Activated CD8-positive, alpha-beta T cell treated with anti-CD3 and anti-CD28 coated beads for 36 hours (primary cell): ENCODE measurements at regions of chr19 and their contacts with region 1.

Region 1: GRCh38 chr19:1837625-1838105 is 10.6 kb downstream of the REXO1 start:
- DNase-seq: peak; percentile 71
- ATAC-seq: peak; percentile 95
- H3K4me3 Mint-ChIP-seq: no peak overlapping the region
- H3K27ac Mint-ChIP-seq: no peak overlapping the region
- H3K4me1 Mint-ChIP-seq: peaks cover 26% of the 10 kb centered on the region
- H3K27me3 Mint-ChIP-seq: no peaks in the 10 kb centered on the region
- CTCF ChIP-seq: peak; percentile 94

Region 2: GRCh38 chr19:1847684-1848398 is 10.2 kb after region 1 on chr19:
- CTCF ChIA-PET with region 1: interaction called, 24 read pairs
- POLR2A ChIA-PET with region 1: interaction called, 16 read pairs
- intact Hi-C with region 1: no loop called
- DNase-seq: peak; percentile 59
- ATAC-seq: peak; percentile 28
- H3K4me3 Mint-ChIP-seq: peak overlapping the region; percentile 84
- H3K27ac Mint-ChIP-seq: peak overlapping the region; percentile 92
- H3K4me1 Mint-ChIP-seq: peaks cover 55% of the 10 kb centered on the region
- H3K27me3 Mint-ChIP-seq: no peaks in the 10 kb centered on the region
- CTCF ChIP-seq: no peak

Region 3: DNA sequence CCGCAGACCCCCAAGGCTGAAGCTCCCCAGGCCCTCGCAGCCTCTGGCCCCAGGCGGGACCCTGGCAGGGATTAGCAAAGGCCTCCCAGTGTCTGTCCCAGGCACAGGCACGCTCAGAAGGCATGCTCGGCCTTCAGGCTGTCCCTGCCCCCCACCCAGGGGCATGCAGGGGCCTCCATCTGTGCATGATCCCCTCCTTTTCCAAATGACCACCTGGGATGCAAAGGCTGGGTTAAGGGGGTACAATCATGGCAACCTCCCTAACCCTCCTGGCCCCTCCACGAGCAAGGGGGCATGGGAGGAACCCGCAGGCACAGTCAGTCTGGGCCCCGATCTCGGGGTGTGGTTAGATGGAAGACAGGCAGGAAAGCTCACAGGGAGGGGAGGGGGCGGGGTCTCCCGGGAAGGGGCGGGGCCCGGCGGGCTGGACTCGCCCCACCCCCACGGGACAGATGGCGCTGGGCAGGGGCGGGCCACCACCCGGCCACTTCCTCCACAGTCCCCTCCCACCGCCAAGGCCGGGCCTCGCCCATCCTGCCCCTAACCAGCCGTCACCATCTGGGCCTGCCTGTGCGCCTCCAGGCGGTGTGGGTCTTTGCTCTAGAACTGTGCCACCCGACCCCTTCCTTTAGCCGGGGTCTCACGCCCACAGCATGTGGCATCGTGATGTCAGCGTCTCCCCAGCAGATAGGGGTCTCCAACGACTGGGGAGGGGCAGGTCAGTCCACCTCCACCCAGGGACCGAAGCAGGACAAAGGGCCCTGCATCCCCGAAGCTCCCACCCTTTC is 17.6 kb after region 1 on chr19:
- CTCF ChIA-PET with region 1: interaction called, 19 read pairs
- POLR2A ChIA-PET with region 1: interaction called, 3 read pairs
- intact Hi-C with region 1: no loop called
- DNase-seq: peak; percentile 92
- ATAC-seq: peak; percentile 81
- H3K4me3 Mint-ChIP-seq: peak overlapping the region; percentile 85
- H3K27ac Mint-ChIP-seq: peak overlapping the region; percentile 90
- H3K4me1 Mint-ChIP-seq: peaks cover 57% of the 10 kb centered on the region
- H3K27me3 Mint-ChIP-seq: no peaks in the 10 kb centered on the region
- CTCF ChIP-seq: no peak